ENCODE measurements at regions of chr14 and their contacts with region 1.

Region 1: DNA sequence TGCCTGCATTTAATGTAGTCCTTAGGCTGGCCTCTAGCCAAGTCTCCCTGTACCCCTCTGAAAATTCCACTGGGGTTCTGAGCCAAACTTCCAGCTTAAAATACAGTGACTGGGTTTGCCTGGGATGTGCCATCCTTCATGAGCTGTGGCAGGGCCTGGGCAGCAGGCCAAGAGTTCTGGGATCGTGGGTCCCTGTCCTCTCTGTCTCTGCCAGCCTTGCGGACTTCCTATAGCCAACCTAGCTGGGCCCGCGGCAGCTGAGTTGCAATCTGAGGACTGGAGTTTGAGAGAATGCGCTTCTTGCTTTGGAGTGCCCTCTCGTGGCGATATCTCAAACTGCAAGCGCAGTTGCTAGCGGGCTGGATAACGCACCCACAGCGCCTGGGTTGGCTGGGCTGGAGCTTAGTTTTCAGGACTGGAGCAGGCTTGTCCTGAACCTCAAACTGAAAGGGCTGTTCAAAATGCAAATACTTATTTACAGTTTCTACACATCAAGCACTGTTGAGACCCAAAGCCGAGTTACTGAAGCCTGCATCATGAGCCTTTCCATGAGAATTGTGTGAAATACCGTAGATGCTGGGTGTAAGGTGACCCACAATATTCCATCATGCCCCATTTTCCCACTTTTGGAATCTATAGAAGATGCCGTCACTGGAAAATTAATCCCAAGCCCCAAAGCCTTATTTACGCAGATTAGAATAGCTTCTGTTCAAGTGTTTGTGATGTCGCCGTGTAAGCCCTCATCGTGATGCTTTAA is 7.3 kb upstream of the IFI27L2 start:
- DNase-seq: no peak
- ATAC-seq: peak; percentile 96
- H3K4me3 ChIP-seq: no peak overlapping the region
- H3K27ac ChIP-seq: no peak overlapping the region
- H3K4me1 ChIP-seq: no peaks in the 10 kb centered on the region
- H3K27me3 ChIP-seq: no peaks in the 10 kb centered on the region
- CTCF ChIP-seq: peak; percentile 89

Region 2: GRCh38 chr14:93939304-93940229 is 197.2 kb before region 1 on chr14:
- CTCF ChIA-PET with region 1: interaction called, 4 read pairs
- POLR2A ChIA-PET with region 1: no interaction called
- in situ Hi-C with region 1: no loop called
- intact Hi-C with region 1: loop called (anchors 10 kb)
- DNase-seq: no peak
- ATAC-seq: peak; percentile 91
- H3K4me3 ChIP-seq: peak overlapping the region; percentile 20 to 25; a peak in 3 of 4 replicates
- H3K27ac ChIP-seq: 0 out of 2 replicates have a peak overlapping the region, but pooled peaks have one; percentile 17
- H3K4me1 ChIP-seq: peaks cover 10% of the 10 kb centered on the region
- H3K27me3 ChIP-seq: no peaks in the 10 kb centered on the region
- CTCF ChIP-seq: peak; percentile 89

Region 3: GRCh38 chr14:93949511-93950075 is 187.2 kb before region 1 on chr14:
- CTCF ChIA-PET with region 1: no interaction called
- POLR2A ChIA-PET with region 1: no interaction called
- in situ Hi-C with region 1: no loop called
- intact Hi-C with region 1: no loop called
- DNase-seq: no peak
- ATAC-seq: peak; percentile 33; the same call in 1 of the 2 replicates
- H3K4me3 ChIP-seq: no peak overlapping the region
- H3K27ac ChIP-seq: no peak overlapping the region
- H3K4me1 ChIP-seq: peaks cover 16% of the 10 kb centered on the region
- H3K27me3 ChIP-seq: no peaks in the 10 kb centered on the region
- CTCF ChIP-seq: no peak

Region 4: GRCh38 chr14:94036313-94037050 is 100.3 kb before region 1 on chr14:
- CTCF ChIA-PET with region 1: interaction called, 16 read pairs
- POLR2A ChIA-PET with region 1: no interaction called
- in situ Hi-C with region 1: no loop called
- intact Hi-C with region 1: loop called (anchors 2 kb)
- DNase-seq: peak; percentile 62
- ATAC-seq: peak; percentile 97
- H3K4me3 ChIP-seq: no peak overlapping the region
- H3K27ac ChIP-seq: no peak overlapping the region
- H3K4me1 ChIP-seq: no peaks in the 10 kb centered on the region
- H3K27me3 ChIP-seq: no peaks in the 10 kb centered on the region
- CTCF ChIP-seq: peak; percentile 85

Region 5: DNA sequence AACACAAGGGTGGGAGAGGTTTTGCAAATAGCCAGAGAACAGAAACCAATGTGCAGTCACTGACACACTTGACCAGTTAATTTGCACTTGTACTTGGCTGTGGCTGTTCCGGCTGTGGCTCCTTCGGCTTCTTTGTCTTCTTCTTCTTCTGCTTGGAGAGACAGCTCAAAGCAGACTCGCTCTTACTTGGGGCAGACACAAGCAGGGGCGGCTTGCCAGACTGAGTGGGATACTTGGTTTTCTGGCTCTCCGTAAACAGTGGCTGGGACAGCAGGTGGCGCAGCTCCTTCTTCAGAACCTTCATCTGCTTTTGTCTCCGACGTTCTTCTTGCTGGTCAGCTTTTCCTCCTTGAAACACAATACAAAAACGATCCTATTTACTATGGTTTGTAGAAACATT is 85.6 kb before region 1 on chr14:
- CTCF ChIA-PET with region 1: interaction called, 3 read pairs
- POLR2A ChIA-PET with region 1: no interaction called
- in situ Hi-C with region 1: no loop called
- intact Hi-C with region 1: loop called (anchors 5 kb)
- DNase-seq: no peak
- ATAC-seq: no peak
- H3K4me3 ChIP-seq: no peak overlapping the region
- H3K27ac ChIP-seq: no peak overlapping the region
- H3K4me1 ChIP-seq: no peaks in the 10 kb centered on the region
- H3K27me3 ChIP-seq: no peaks in the 10 kb centered on the region
- CTCF ChIP-seq: no peak; the same call in 1 of the 2 replicates

Region 6: DNA sequence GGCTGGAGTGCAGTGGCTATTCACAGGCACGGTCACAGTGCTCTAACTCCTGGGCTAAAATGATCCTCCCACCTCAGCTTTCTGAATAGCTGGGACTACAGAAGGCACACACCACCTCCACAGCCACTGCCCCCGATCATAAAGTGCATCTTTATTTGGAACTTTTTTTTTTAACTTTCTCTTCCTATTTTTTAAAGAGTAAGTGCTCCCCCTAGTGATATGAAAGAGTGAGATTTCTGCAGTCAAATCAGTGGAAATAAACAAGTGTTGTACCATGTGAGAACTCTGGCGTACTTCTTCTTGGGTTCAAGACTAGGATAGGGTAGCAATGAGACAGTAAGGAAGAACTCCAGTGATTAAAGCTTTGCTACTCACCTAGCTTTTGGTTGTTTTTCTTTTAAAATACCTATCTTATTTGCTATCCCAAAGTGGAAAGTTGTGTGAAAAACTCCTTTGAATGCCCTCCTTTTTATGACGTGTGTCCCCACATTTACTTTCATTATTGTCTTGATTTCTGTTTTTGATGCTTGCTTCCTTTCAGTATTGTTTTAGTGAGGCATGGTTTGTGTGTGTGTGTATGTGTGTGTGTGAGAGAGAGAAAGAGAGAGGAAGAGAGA is 44.0 kb after region 1 on chr14:
- CTCF ChIA-PET with region 1: interaction called, 13 read pairs
- POLR2A ChIA-PET with region 1: no interaction called
- in situ Hi-C with region 1: no loop called
- intact Hi-C with region 1: loop called (anchors 5 kb)
- DNase-seq: no peak
- ATAC-seq: peak; percentile 63; the same call in 1 of the 2 replicates
- H3K4me3 ChIP-seq: peak overlapping the region in 1 of 2 experiments; percentile 1; a peak in 1 of 4 replicates
- H3K27ac ChIP-seq: no peak overlapping the region
- H3K4me1 ChIP-seq: no peaks in the 10 kb centered on the region; the same call in 1 of the 2 replicates
- H3K27me3 ChIP-seq: peaks cover 4% of the 10 kb centered on the region; the same call in 1 of the 2 replicates
- CTCF ChIP-seq: peak; percentile 66

Region 7: GRCh38 chr14:94307410-94307992 is 170.7 kb after region 1 on chr14:
- CTCF ChIA-PET with region 1: no interaction called
- POLR2A ChIA-PET with region 1: no interaction called
- in situ Hi-C with region 1: no loop called
- intact Hi-C with region 1: loop called (anchors 5 kb)
- DNase-seq: no peak
- ATAC-seq: peak; percentile 60; the same call in 1 of the 2 replicates
- H3K4me3 ChIP-seq: no peak overlapping the region
- H3K27ac ChIP-seq: no peak overlapping the region
- H3K4me1 ChIP-seq: no peaks in the 10 kb centered on the region
- H3K27me3 ChIP-seq: no peaks in the 10 kb centered on the region
- CTCF ChIP-seq: peak; percentile 64

Region 8: DNA sequence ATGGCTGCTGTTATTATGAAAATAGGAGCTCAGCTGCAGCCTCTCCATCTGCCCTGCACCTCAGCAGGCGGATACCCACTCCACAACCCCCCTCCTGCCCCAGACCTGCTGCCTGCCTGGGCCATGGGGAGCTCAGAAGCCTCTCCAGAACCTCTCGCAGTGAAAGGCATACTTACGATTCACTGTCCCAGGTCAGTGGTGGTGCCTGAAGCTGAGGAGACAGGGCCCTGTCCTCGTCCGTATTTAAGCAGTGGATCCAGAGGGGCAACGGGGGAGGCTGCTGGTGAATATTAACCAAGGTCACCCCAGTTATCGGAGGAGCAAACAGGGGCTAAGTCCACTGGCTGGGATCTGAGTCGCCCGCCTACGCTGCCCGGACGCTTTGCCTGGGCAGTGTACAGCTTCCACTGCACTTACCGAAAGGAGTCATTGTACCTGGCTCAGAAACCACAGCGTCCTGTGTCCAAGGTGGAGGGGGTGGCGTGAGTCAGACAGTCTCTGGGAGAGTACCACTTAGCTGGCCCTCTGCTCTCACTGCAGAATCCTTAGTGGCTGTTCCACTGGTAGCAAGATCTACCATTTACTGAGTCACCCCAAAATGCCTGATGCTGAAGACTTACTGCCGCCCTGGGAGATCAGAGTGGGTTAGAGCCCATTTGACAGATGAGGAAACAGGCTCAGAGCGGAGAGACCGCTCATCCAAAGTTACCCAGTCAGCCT is 251.8 kb after region 1 on chr14 and contains the start of gene SERPINA1:
- CTCF ChIA-PET with region 1: no interaction called
- POLR2A ChIA-PET with region 1: no interaction called
- in situ Hi-C with region 1: no loop called
- intact Hi-C with region 1: no loop called
- DNase-seq: no peak
- ATAC-seq: 0 out of 2 replicates have a peak, but pooled peaks have one; percentile 16
- H3K4me3 ChIP-seq: no peak within 1 kb of the TSS
- H3K27ac ChIP-seq: no peak within 1 kb of the TSS
- H3K4me1 ChIP-seq: no peaks in the 10 kb centered on the region
- H3K27me3 ChIP-seq: no peaks in the 10 kb centered on the region
- CTCF ChIP-seq: no peak
- total RNA-seq, gene SERPINA1: 4.9 TPM

Measured in Panc1 (cell line).